ENCODE measurements at regions of chr14 and their contacts with region 1.

Region 1: DNA sequence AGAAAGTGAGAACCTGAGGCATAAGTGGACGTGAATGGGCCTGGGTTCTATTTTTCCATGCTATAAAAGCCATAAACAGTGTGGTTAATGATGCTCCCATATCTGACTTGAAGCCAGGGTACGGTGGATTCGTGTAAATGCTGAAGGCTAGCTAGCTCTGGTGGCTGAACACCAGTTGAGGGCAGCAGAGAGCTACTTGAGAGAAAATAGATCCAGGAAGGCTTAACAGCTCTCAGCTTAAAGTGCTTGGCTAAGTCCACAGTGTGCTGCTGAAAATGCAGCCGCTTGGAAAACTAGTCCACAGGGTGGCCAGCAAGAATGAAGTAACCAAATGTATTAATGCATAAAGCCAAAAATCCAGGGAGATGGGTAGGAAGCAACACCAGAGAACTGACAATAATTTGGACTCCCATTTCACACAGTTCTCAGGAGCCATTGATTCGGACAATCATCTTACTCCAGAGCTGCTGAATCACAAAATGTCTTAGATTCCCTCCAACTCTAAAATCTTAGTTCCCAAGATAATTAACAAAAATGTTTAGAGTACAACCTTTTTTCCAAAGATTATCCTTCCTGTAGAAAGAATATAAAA is 15.0 kb upstream of the FOXG1 start:
- DNase-seq: no peak
- ATAC-seq: no peak
- H3K4me3 ChIP-seq: no peak overlapping the region
- H3K27ac ChIP-seq: no peak overlapping the region
- H3K4me1 ChIP-seq: no peaks in the 10 kb centered on the region
- H3K27me3 ChIP-seq: peaks cover under 1 to 72% (median 53%) of the 10 kb centered on the region in 7 donors
- CTCF ChIP-seq: peak in 7 of 9 donors; percentile 28 to 53 (median 37)

Region 2: GRCh38 chr14:28785096-28785952 is 33.8 kb after region 1 on chr14:
- intact Hi-C with region 1: no loop called
- DNase-seq: no peak
- ATAC-seq: no peak
- H3K4me3 ChIP-seq: peak overlapping the region in 7 of 10 donors; percentile 1 to 29 (median 24)
- H3K27ac ChIP-seq: no peak overlapping the region
- H3K4me1 ChIP-seq: peaks cover 0 to 11% (median 9%) of the 10 kb centered on the region in 9 donors
- H3K27me3 ChIP-seq: peaks cover 0 to 82% (median 66%) of the 10 kb centered on the region in 7 donors
- CTCF ChIP-seq: no peak

Region 3: GRCh38 chr14:29536886-29537511 is 785.4 kb after region 1 on chr14:
- intact Hi-C with region 1: loop called in 8 of 10 experiments (anchors 5 to 10 kb)
- DNase-seq: no peak
- ATAC-seq: no peak
- H3K4me3 ChIP-seq: no peak overlapping the region
- H3K27ac ChIP-seq: no peak overlapping the region
- H3K4me1 ChIP-seq: no peaks in the 10 kb centered on the region
- H3K27me3 ChIP-seq: peaks cover 0 to 24% (median 6%) of the 10 kb centered on the region in 7 donors
- CTCF ChIP-seq: peak in 7 of 9 donors; percentile 33 to 55 (median 41)

Region 4: DNA sequence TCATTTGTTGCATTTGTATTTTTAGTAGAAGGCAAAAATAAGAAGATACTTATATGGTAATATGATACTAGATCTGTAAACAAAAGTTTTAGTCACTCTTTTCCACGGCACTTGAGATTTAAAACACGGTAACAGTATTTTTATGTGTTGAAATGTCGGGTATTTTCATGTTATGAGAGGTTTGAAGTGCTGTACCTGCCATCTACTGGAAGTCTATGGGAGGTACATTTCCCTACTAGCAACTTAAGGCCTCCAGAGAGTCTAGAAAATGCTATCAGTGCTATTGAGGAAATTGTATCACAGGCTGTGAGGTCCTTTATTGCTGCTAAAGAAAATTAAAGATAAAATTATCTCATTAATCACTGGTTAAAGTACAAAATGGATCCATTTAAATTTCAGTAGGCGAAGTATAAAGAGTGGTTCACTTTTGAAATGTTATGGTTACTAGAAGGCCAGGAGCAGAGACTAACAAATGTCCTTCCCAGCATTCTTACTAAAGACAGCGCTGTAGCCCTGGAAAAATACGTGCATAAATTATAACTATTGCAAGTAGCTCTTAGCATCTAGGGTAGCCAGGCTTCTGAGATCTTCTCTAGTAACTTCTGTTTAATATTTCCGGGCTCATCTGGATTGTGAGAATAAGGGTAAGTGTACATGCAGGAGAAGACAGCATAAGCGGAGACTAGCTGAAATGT is 1253.7 kb after region 1 on chr14:
- intact Hi-C with region 1: loop called in 1 of 10 experiments (anchors 10 kb)
- DNase-seq: no peak
- ATAC-seq: peak in 7 of 8 donors; percentile 43 to 82 (median 62)
- H3K4me3 ChIP-seq: no peak overlapping the region
- H3K27ac ChIP-seq: no peak overlapping the region
- H3K4me1 ChIP-seq: no peaks in the 10 kb centered on the region
- H3K27me3 ChIP-seq: no peaks in the 10 kb centered on the region
- CTCF ChIP-seq: peak; percentile 57 to 88 (median 80)

Region 5: GRCh38 chr14:30214461-30215090 is 1463.0 kb after region 1 on chr14:
- intact Hi-C with region 1: loop called in 7 of 10 experiments (anchors 2 to 10 kb)
- DNase-seq: no peak
- ATAC-seq: peak in 3 of 8 donors; percentile 47 to 62 (median 61)
- H3K4me3 ChIP-seq: no peak overlapping the region
- H3K27ac ChIP-seq: no peak overlapping the region
- H3K4me1 ChIP-seq: no peaks in the 10 kb centered on the region
- H3K27me3 ChIP-seq: peaks cover 0 to 4% (median 0%) of the 10 kb centered on the region in 7 donors
- CTCF ChIP-seq: peak in 7 of 9 donors; percentile 46 to 66 (median 61)

Region 6: DNA sequence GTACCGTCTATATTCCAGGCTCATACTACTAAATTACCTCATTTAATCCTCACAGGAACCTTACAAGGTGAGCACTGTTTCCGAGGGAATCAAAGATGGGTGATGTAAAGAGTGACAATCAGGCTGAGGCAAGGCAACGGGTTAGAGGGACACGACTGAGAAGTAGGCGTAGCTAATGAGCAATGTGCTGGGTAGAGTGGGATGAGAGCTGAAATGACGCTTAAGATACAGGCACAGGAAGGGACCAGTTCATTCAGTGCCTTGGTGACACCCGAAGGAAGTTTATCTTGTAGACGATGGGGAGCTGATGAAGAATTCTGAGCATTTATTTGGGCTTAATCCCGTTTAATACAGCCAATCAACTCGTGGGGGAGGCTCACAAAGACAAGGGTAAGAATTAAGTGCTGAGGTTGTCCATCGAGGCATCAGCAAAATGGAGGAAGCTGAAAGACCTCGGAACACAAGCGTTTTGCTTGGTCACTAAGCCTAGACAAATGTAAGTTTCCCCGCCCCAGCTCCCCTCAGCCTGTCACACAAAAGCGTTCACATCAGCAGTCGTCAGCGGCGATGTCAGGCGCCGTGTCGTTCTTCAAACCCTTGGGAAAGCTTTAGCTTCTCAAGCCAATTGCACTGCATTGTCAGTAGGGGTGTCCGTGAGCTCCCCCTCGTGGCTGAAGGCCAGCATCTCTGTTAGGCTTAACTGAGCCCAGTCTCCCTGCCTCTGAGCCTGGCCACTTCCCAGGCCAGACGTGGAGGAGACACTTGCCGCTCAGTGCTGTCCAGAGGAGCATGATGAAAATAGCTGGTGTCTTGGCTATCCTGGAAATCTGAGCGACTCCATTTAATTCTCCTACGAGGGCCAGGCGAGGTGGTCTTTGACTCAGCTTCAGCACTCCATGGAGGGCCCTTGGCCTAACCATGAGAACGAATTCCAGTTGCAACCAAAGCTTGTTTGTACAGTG is 1518.9 kb after region 1 on chr14:
- intact Hi-C with region 1: loop called in 1 of 10 experiments (anchors 5 kb)
- DNase-seq: peak; percentile 76 to 80
- ATAC-seq: peak; percentile 70 to 98 (median 92)
- H3K4me3 ChIP-seq: peak overlapping the region in 6 of 10 donors; percentile 20 to 35 (median 27)
- H3K27ac ChIP-seq: no peak overlapping the region
- H3K4me1 ChIP-seq: peaks cover 0 to 7% (median 0%) of the 10 kb centered on the region in 9 donors
- H3K27me3 ChIP-seq: peaks cover 0 to 10% (median 0%) of the 10 kb centered on the region in 7 donors
- CTCF ChIP-seq: peak; percentile 77 to 94 (median 84)

Region 7: GRCh38 chr14:30443368-30444007 is 1691.9 kb after region 1 on chr14:
- intact Hi-C with region 1: loop called in 3 of 10 experiments (anchors 10 kb)
- DNase-seq: no peak
- ATAC-seq: peak in 1 of 8 donors; percentile 56
- H3K4me3 ChIP-seq: no peak overlapping the region
- H3K27ac ChIP-seq: no peak overlapping the region
- H3K4me1 ChIP-seq: no peaks in the 10 kb centered on the region
- H3K27me3 ChIP-seq: peaks cover 0 to 4% (median 0%) of the 10 kb centered on the region in 7 donors
- CTCF ChIP-seq: peak in 8 of 9 donors; percentile 12 to 67 (median 51)

Region 8: GRCh38 chr14:30521899-30522736 is 1770.6 kb after region 1 on chr14:
- intact Hi-C with region 1: loop called in 2 of 10 experiments (anchors 10 kb)
- DNase-seq: no peak
- ATAC-seq: no peak
- H3K4me3 ChIP-seq: no peak overlapping the region
- H3K27ac ChIP-seq: no peak overlapping the region
- H3K4me1 ChIP-seq: peaks cover 0 to 12% (median 0%) of the 10 kb centered on the region in 9 donors
- H3K27me3 ChIP-seq: no peaks in the 10 kb centered on the region
- CTCF ChIP-seq: peak; percentile 39 to 82 (median 72)